Transverse colon (tissue), 4 donors: ENCODE measurements at regions of chr4 and their contacts with region 1.

Region 1: DNA sequence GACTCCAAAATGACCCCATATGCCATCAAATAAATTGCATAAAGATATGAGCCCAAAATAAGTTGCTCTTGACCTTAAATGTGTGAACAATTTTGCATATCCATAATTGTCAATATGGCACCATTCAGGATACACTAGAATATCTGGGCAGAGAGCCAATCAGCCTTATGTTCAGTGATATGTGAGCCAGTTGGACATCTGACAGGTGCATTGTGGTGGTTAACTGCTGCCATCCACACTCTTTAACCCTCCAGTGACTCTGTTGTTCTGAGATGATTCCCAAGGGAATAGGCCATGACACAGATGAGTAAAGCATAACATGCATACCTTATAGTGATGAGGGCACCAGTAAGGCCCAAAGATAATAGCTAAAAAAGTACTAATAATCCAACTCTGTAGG is 500.1 kb downstream of the PCDH18 start:
- DNase-seq: no peak
- H3K4me3 ChIP-seq: no peak overlapping the region
- H3K27ac ChIP-seq: no peak overlapping the region
- H3K4me1 ChIP-seq: no peaks in the 10 kb centered on the region
- H3K27me3 ChIP-seq: no peaks in the 10 kb centered on the region
- CTCF ChIP-seq: no peak
- EP300 ChIP-seq: no peak
- POLR2A ChIP-seq: no peak

Region 2: DNA sequence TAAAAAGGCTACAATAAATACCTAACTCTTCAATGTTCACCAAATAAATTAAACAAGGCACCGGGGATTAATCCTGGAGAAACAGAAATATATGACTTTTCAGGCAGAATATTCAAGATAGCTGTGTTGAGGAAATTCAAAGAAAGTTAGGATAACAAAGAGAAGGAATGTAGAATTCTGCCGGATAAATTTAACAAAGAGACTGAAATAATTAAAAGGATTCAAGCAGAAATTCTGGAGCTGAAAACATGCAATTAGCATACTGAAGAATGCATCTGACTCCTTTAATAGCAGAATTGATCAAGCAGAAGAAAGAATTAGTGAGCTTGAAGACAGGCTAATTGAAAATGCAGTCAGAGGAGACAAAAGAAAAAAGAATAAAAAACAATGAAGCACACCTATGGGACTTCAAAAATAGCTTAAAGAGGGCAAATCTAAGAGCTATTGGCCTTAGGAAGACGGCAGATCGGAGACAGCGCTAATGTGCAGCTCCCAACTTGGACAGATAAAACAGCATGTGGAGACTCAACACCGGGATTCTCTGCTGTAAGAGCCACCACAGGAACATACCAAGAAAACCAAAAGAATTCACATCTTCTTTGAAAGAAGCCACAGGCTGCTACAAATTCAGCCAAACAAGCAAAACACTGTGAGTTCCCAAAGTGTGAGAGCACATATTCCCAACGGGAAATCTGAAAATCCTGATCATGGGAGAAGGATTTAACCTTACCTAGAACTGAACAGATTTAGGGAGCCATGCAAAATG is 790.8 kb before region 1 on chr4:
- in situ Hi-C with region 1: no loop called
- intact Hi-C with region 1: loop called (anchors 10 kb)
- DNase-seq: no peak
- H3K4me3 ChIP-seq: no peak overlapping the region
- H3K27ac ChIP-seq: no peak overlapping the region
- H3K4me1 ChIP-seq: no peaks in the 10 kb centered on the region
- H3K27me3 ChIP-seq: no peaks in the 10 kb centered on the region
- CTCF ChIP-seq: no peak
- EP300 ChIP-seq: no peak
- POLR2A ChIP-seq: no peak

Region 3: GRCh38 chr4:136731025-136731424 is 301.2 kb before region 1 on chr4:
- in situ Hi-C with region 1: no loop called
- intact Hi-C with region 1: no loop called
- DNase-seq: no peak
- H3K4me3 ChIP-seq: no peak overlapping the region
- H3K27ac ChIP-seq: no peak overlapping the region
- H3K4me1 ChIP-seq: no peaks in the 10 kb centered on the region
- H3K27me3 ChIP-seq: no peaks in the 10 kb centered on the region
- CTCF ChIP-seq: no peak
- EP300 ChIP-seq: no peak
- POLR2A ChIP-seq: no peak

Region 4: GRCh38 chr4:136967069-136967468 is 65.2 kb before region 1 on chr4:
- in situ Hi-C with region 1: no loop called
- intact Hi-C with region 1: no loop called
- DNase-seq: no peak
- H3K4me3 ChIP-seq: no peak overlapping the region
- H3K27ac ChIP-seq: no peak overlapping the region
- H3K4me1 ChIP-seq: no peaks in the 10 kb centered on the region
- H3K27me3 ChIP-seq: no peaks in the 10 kb centered on the region
- CTCF ChIP-seq: no peak
- EP300 ChIP-seq: no peak
- POLR2A ChIP-seq: no peak

Region 5: GRCh38 chr4:137451172-137451850 is 419.1 kb after region 1 on chr4:
- in situ Hi-C with region 1: no loop called
- intact Hi-C with region 1: loop called (anchors 5 kb)
- DNase-seq: no peak
- H3K4me3 ChIP-seq: no peak overlapping the region
- H3K27ac ChIP-seq: no peak overlapping the region
- H3K4me1 ChIP-seq: no peaks in the 10 kb centered on the region
- H3K27me3 ChIP-seq: no peaks in the 10 kb centered on the region
- CTCF ChIP-seq: no peak
- EP300 ChIP-seq: no peak
- POLR2A ChIP-seq: no peak